Heart left ventricle (tissue), 16 donors: ENCODE measurements at regions of chr9 and their contacts with region 1.

Region 1: DNA sequence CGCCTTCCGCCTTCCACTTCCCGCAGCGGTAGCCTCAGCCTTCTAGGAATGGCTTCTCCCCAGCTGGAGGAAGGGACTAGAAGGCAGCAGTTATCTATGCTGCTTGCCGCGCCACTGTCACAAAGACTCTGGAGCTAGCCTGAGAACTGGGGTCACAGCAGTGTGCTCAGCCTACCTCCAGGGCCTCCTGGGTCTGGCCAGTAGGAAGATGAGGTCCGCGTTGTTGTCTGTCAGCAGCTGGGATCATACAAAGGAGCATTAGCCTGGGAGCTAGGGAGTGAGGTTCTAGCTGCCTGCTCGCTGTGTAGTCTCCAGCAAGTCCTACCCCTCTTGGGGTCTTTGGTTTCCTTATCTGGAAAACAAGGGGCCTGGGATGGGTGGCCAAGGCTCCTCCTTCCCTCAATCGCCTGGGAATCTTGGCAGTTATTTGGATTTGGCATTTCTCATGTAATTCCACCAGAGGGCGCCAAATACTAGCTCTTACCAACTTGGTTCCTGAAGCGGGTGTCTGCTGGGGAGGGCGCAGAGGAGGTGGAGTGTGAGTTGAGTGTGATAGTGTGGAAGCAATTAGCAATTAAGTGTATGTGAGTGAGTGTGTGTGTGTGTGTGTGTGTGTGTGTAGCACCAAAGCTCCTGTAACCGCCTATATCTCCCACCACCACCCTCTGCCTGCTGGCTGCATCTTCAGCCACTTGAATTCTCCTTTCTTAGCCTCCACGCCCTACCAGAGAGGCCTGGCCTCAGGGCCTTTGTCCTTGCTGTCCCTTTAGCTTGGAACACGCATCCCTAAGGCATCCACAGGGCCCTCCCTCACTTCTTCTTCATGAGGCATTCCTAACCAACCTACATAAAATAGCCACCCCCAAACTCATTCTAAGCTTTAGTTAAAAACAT is 97.1 kb downstream of the ENTREP1 start:
- DNase-seq: peak in 3 of 5 donors; percentile 57 to 60 (median 57)
- ATAC-seq: peak; percentile 55 to 80 (median 76)
- H3K4me3 ChIP-seq: no peak overlapping the region
- H3K27ac ChIP-seq: no peak overlapping the region
- H3K4me1 ChIP-seq: no peaks in the 10 kb centered on the region
- H3K27me3 ChIP-seq: peaks cover 0 to 5% (median 0%) of the 10 kb centered on the region in 9 donors
- CTCF ChIP-seq: peak; percentile 69 to 82 (median 78)
- POLR2A ChIP-seq: no peak

Region 2: GRCh38 chr9:69379250-69379982 is 42.7 kb before region 1 on chr9:
- intact Hi-C with region 1: no loop called
- DNase-seq: peak in 2 of 5 donors; percentile 58 to 62
- ATAC-seq: peak; percentile 80 to 93 (median 90)
- H3K4me3 ChIP-seq: no peak overlapping the region
- H3K27ac ChIP-seq: peak overlapping the region; percentile 65 to 89 (median 81)
- H3K4me1 ChIP-seq: peaks cover 0 to 58% (median 37%) of the 10 kb centered on the region in 12 donors
- H3K27me3 ChIP-seq: no peaks in the 10 kb centered on the region
- CTCF ChIP-seq: no peak
- POLR2A ChIP-seq: no peak

Region 3: GRCh38 chr9:69549310-69550202 is 127.4 kb after region 1 on chr9:
- intact Hi-C with region 1: loop called (anchors 2 to 5 kb)
- DNase-seq: no peak
- ATAC-seq: peak in 3 of 4 donors; percentile 39 to 70 (median 44)
- H3K4me3 ChIP-seq: no peak overlapping the region
- H3K27ac ChIP-seq: no peak overlapping the region
- H3K4me1 ChIP-seq: peaks cover 0 to 7% (median 2%) of the 10 kb centered on the region in 12 donors
- H3K27me3 ChIP-seq: no peaks in the 10 kb centered on the region
- CTCF ChIP-seq: peak; percentile 74 to 93 (median 86)
- POLR2A ChIP-seq: no peak

Region 4: DNA sequence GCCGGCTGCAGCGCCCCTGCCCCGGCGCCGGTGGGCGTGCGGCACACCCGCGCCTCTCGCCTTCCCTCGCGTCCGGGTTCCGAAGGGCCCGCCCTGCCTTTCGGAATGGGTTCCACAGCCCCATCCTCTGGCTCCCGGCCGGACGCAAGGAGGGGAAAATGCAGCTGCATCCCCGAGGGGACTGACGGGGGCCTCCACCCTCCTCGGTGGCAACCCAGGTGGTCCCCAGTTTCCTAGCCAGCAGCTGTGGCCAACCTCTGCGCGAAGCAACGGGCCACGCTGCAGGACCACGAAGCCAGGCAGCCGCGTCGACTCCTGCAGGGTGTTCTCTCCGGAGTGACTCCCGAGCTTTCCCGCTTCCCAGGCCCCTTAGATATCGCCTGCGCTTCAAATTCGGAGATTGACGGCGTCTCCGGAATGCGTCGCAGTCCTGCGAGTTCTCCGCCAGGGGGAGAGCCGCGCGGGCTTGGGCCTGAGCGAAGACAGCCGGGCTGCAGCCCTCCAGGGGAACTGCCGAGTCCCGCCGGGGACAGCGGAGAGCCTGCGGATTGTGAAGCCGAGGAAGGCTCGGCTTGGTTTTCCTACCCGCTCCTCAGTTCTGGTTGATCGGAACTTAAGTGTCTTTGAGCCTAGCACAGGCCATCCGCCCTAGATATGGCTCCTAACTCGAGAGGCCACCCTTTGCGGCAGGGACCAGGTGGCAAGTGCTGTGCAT is 250.6 kb after region 1 on chr9:
- intact Hi-C with region 1: loop called in 2 of 10 experiments (anchors 5 to 10 kb)
- DNase-seq: peak; percentile 83 to 92 (median 85)
- ATAC-seq: peak; percentile 87 to 93 (median 92)
- H3K4me3 ChIP-seq: peak overlapping the region; percentile 48 to 99 (median 82)
- H3K27ac ChIP-seq: peak overlapping the region; percentile 35 to 89 (median 80)
- H3K4me1 ChIP-seq: peaks cover 0 to 27% (median 8%) of the 10 kb centered on the region in 12 donors
- H3K27me3 ChIP-seq: no peaks in the 10 kb centered on the region
- CTCF ChIP-seq: peak; percentile 76 to 97 (median 86)
- POLR2A ChIP-seq: no peak

Region 5: DNA sequence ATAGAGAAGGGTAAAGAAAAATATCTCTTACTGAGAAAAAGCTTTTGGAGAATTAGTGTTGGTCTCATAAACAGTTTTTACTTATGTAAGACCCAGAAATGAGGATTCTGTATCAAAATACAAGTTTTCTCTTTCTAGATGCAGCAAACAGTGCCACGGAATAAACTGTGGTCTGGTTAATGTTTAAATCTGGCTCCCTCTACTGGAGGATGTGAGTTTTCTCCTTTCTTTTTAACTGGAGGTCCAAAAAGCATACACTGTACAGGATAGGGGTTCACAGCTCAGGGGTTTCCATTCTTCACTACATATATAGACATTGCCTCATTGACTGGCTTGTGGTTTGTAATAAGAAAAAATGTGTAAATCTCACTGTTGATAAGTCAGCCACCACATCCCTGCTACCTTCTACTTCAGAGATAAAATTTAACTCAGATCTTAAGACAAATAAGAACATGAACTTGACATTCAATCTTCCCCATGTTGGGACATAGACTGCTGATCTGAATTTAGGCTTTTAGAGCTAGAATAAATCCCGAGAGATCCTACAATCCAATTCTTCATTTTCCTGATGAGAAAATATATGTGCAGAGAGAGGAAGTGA is 497.4 kb after region 1 on chr9:
- intact Hi-C with region 1: loop called in 7 of 10 experiments (anchors 2 to 10 kb)
- DNase-seq: no peak
- ATAC-seq: peak; percentile 44 to 82 (median 72)
- H3K4me3 ChIP-seq: no peak overlapping the region
- H3K27ac ChIP-seq: no peak overlapping the region
- H3K4me1 ChIP-seq: peaks cover 0 to 3% (median 0%) of the 10 kb centered on the region in 12 donors
- H3K27me3 ChIP-seq: peaks cover 0 to 12% (median 0%) of the 10 kb centered on the region in 9 donors
- CTCF ChIP-seq: peak; percentile 47 to 80 (median 64)
- POLR2A ChIP-seq: no peak

Region 6: DNA sequence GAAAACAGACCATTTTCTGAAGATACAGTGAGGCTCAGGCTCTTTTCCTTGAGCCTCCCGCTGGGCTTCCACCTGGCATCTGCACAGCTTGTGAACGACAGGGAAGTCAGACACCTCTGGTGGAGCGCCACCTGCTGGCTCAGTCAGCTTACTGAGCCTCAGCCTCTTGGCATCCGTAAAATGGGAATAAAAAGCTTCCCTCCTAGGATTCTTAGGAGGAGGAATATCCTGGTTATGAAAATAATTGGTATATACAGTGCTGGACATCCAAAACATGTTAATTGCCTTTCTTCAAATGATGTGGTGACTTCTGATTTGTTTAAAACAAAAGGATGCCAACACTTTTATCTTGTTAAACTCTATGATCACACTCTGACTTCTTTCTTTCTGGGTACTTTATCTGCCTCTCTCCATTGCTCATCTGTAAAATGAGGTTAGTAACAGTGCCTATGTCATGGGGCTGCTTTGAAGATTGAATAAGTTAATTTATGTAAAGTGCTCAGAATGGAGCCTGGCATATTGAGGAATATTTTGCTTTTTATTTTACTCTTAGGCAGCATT is 689.0 kb after region 1 on chr9:
- intact Hi-C with region 1: loop called in 2 of 10 experiments (anchors 5 to 10 kb)
- DNase-seq: peak; percentile 76 to 88 (median 79)
- ATAC-seq: peak; percentile 47 to 87 (median 84)
- H3K4me3 ChIP-seq: no peak overlapping the region
- H3K27ac ChIP-seq: peak overlapping the region in 8 of 12 donors; percentile 7 to 61 (median 19)
- H3K4me1 ChIP-seq: peaks cover 0 to 17% (median 3%) of the 10 kb centered on the region in 12 donors
- H3K27me3 ChIP-seq: no peaks in the 10 kb centered on the region
- CTCF ChIP-seq: peak; percentile 70 to 95 (median 84)
- POLR2A ChIP-seq: no peak